Head of caudate nucleus (tissue), 42 donors: ENCODE measurements at regions of chr1 and their contacts with region 1.

Region 1: DNA sequence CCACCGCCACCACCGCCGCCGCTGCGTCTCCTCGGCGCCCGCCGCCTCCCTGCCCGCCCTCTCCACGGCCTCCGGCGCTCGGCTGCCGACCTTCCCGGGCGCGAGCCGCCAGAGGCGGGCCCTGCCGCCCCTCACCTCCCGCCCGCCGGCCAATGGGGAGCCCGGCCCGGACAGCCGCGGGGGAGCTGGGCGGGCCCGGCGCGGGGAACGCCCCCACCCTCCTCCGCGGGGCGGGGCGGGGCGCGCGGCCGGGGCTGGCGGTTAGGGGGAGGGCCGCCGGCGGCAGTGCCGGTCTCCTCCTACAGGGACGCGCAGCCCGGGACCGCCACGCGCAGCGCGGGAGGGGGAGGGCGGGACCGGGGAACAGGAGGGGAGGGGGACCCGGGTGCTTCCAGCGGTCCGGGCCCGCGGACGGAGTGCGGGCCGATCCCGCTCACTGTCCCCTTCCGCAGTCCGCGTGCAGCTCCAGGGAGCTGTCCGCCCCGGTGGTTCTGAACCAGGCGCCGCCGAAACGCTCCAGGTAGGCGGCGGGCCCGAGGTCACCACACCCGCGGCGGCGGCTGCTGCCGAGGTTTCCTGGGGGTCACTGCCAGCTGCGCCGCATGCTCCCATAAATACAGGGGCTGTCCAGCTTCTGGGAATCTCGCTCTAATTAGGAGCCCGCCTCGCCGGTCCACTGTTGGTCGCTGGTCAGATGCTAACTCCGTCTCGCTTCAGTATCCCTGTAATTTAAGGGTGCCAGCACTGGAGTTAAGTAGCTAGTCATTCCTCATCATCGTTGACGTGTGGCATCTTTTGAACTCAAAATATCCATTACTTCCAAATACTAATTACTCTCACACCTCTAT is at the start of gene PGBD5:
- DNase-seq: peak in 41 of 42 donors; percentile 61 to 94 (median 87)

Region 2: GRCh38 chr1:230277201-230278025 is 149.1 kb before region 1 on chr1:
- intact Hi-C with region 1: no loop called
- DNase-seq: peak in 7 of 42 donors; percentile 6 to 41 (median 19)

Region 3: GRCh38 chr1:230292689-230293389 is 133.6 kb before region 1 on chr1:
- intact Hi-C with region 1: no loop called
- DNase-seq: peak in 4 of 42 donors; percentile 4 to 24 (median 10)

Region 4: GRCh38 chr1:230359992-230360668 is 66.3 kb before region 1 on chr1:
- intact Hi-C with region 1: loop called (anchors 10 kb)
- DNase-seq: no peak

Region 5: GRCh38 chr1:230382060-230382491 is 44.4 kb before region 1 on chr1:
- intact Hi-C with region 1: no loop called
- DNase-seq: peak in 5 of 42 donors; percentile 42 to 58 (median 46)

Region 6: GRCh38 chr1:230476622-230477003 is 50.1 kb after region 1 on chr1:
- intact Hi-C with region 1: no loop called
- DNase-seq: no peak